ENCODE measurements at regions of chr14 and their contacts with region 1.

Region 1: GRCh38 chr14:61296719-61297502 is 15.8 kb upstream of the TMEM30B start:
- DNase-seq: peak; percentile 61
- H3K4me3 Mint-ChIP-seq: no peak overlapping the region
- H3K27ac Mint-ChIP-seq: no peak overlapping the region
- H3K4me1 Mint-ChIP-seq: no peaks in the 10 kb centered on the region
- H3K27me3 Mint-ChIP-seq: no peaks in the 10 kb centered on the region
- CTCF ChIP-seq: peak; percentile 63

Region 2: GRCh38 chr14:61430066-61430739 is 133.3 kb after region 1 on chr14:
- CTCF ChIA-PET with region 1: no interaction called
- POLR2A ChIA-PET with region 1: no interaction called
- intact Hi-C with region 1: no loop called
- DNase-seq: no peak
- H3K4me3 Mint-ChIP-seq: no peak overlapping the region
- H3K27ac Mint-ChIP-seq: no peak overlapping the region
- H3K4me1 Mint-ChIP-seq: peaks cover 28% of the 10 kb centered on the region
- H3K27me3 Mint-ChIP-seq: no peaks in the 10 kb centered on the region
- CTCF ChIP-seq: no peak

Region 3: DNA sequence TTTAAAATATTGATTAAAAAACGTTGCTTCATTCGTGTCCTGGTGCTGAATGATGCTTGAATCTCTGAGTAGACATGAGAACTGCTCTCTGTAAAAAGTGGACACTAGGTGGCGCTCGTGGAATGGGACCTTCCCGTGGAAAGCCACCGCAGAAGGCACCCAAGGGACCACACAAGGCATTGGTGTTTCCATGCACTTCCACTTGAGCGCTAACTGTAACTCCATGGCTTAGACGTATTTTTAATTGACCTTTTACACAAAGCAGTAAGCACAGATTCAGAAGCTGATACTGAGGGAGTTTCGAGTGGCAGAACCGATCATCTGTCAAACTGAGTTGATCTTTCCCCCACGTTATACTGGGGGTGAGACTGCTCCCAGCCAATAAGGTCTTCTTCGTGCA is 159.8 kb after region 1 on chr14:
- CTCF ChIA-PET with region 1: interaction called, 6 read pairs
- POLR2A ChIA-PET with region 1: no interaction called
- intact Hi-C with region 1: loop called (anchors 1 kb)
- DNase-seq: peak; percentile 79
- H3K4me3 Mint-ChIP-seq: no peak overlapping the region
- H3K27ac Mint-ChIP-seq: no peak overlapping the region
- H3K4me1 Mint-ChIP-seq: peaks cover 6% of the 10 kb centered on the region
- H3K27me3 Mint-ChIP-seq: no peaks in the 10 kb centered on the region
- CTCF ChIP-seq: peak; percentile 75

Measured in MCF 10A (cell line).